ENCODE measurements at regions of chr2 and their contacts with region 1.

Region 1: DNA sequence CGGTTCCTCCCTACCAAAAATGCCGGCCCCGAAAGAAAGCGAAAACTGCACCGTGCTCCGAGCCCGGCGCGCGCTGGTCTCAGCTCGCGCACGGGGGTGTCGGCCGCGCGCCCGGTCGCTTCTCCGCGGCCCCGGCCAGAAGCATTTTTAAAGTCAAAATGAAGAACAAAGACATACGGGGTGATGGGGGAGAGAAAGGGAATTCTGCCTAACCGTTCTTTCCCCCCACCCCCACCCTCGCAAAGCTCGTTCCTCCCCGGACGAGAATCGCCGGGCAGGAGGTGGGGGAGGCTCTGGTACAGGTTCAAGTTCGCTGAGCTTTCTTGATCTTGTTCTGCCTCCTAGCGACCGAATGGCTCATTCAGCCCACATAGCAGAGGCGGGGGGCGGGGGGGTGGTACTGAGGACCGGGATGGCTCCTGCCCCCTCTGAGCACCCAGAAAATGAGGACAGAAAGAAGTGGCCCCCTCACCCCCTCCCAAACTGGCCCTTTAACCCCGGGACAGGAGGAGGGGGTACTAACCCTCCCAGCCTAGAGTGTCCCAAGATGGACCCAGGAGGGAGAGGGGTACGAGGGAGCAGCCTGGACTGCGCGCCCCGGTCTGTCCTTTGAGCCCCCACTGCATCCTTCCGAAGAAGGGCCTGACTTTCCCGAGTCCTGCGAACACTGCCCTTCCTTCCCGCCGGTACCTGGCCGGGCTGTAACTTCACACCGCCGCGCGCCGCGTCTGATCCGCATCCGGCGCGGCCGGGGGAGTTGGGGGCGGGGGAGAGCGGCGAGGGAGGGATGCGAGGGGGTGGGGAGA is 3.1 kb downstream of the BCL11A start:
- DNase-seq: peak; percentile 68
- ATAC-seq: peak; percentile 56
- H3K4me3 Mint-ChIP-seq: peak overlapping the region; percentile 96
- H3K27ac Mint-ChIP-seq: peak overlapping the region; percentile 98
- H3K4me1 Mint-ChIP-seq: peaks cover 41% of the 10 kb centered on the region
- H3K27me3 Mint-ChIP-seq: no peaks in the 10 kb centered on the region
- CTCF ChIP-seq: peak; percentile 32

Region 2: GRCh38 chr2:59713577-59713976 is 836.8 kb before region 1 on chr2:
- CTCF ChIA-PET with region 1: interaction called, 3 read pairs
- POLR2A ChIA-PET with region 1: no interaction called
- intact Hi-C with region 1: loop called (anchors 5 kb)
- DNase-seq: no peak
- ATAC-seq: peak; percentile 83
- H3K4me3 Mint-ChIP-seq: no peak overlapping the region
- H3K27ac Mint-ChIP-seq: no peak overlapping the region
- H3K4me1 Mint-ChIP-seq: peaks cover 12% of the 10 kb centered on the region
- H3K27me3 Mint-ChIP-seq: no peaks in the 10 kb centered on the region
- CTCF ChIP-seq: no peak

Region 3: GRCh38 chr2:60152226-60152833 is 398.1 kb before region 1 on chr2:
- CTCF ChIA-PET with region 1: interaction called, 4 read pairs
- POLR2A ChIA-PET with region 1: interaction called, 19 read pairs
- intact Hi-C with region 1: loop called (anchors 2 kb)
- DNase-seq: no peak
- ATAC-seq: no peak
- H3K4me3 Mint-ChIP-seq: no peak overlapping the region
- H3K27ac Mint-ChIP-seq: no peak overlapping the region
- H3K4me1 Mint-ChIP-seq: peaks cover 23% of the 10 kb centered on the region
- H3K27me3 Mint-ChIP-seq: no peaks in the 10 kb centered on the region
- CTCF ChIP-seq: no peak

Region 4: DNA sequence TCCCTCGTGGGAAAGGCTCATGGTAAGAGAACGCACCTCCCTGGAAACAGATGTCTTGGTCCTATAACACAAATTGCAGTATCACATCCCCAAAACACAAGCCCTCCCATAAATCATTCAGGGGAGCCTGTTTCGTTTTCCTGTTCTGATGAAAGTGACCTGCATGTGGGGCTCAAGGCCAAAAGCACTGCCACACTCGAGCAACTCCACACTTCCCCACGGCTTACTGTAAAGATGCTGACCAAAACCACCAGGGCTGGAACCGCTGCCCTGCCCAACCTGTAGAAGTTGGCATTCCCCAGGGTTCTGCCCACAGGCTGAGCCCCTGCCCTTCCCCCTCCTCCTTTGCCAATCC is 136.6 kb before region 1 on chr2:
- CTCF ChIA-PET with region 1: interaction called, 6 read pairs
- POLR2A ChIA-PET with region 1: interaction called, 14 read pairs
- intact Hi-C with region 1: loop called (anchors 1 kb)
- DNase-seq: peak; percentile 41
- ATAC-seq: peak; percentile 72
- H3K4me3 Mint-ChIP-seq: peak overlapping the region; percentile 8
- H3K27ac Mint-ChIP-seq: peak overlapping the region; percentile 90
- H3K4me1 Mint-ChIP-seq: peaks cover 87% of the 10 kb centered on the region
- H3K27me3 Mint-ChIP-seq: no peaks in the 10 kb centered on the region
- CTCF ChIP-seq: no peak

Region 5: GRCh38 chr2:60504049-60504448 is 46.3 kb before region 1 on chr2:
- CTCF ChIA-PET with region 1: interaction called, 10 read pairs
- POLR2A ChIA-PET with region 1: interaction called, 47 read pairs
- intact Hi-C with region 1: loop called (anchors 1 kb)
- DNase-seq: no peak
- ATAC-seq: peak; percentile 43
- H3K4me3 Mint-ChIP-seq: peak overlapping the region; percentile 58
- H3K27ac Mint-ChIP-seq: peak overlapping the region; percentile 90
- H3K4me1 Mint-ChIP-seq: peaks cover 98% of the 10 kb centered on the region
- H3K27me3 Mint-ChIP-seq: no peaks in the 10 kb centered on the region
- CTCF ChIP-seq: no peak

Region 6: DNA sequence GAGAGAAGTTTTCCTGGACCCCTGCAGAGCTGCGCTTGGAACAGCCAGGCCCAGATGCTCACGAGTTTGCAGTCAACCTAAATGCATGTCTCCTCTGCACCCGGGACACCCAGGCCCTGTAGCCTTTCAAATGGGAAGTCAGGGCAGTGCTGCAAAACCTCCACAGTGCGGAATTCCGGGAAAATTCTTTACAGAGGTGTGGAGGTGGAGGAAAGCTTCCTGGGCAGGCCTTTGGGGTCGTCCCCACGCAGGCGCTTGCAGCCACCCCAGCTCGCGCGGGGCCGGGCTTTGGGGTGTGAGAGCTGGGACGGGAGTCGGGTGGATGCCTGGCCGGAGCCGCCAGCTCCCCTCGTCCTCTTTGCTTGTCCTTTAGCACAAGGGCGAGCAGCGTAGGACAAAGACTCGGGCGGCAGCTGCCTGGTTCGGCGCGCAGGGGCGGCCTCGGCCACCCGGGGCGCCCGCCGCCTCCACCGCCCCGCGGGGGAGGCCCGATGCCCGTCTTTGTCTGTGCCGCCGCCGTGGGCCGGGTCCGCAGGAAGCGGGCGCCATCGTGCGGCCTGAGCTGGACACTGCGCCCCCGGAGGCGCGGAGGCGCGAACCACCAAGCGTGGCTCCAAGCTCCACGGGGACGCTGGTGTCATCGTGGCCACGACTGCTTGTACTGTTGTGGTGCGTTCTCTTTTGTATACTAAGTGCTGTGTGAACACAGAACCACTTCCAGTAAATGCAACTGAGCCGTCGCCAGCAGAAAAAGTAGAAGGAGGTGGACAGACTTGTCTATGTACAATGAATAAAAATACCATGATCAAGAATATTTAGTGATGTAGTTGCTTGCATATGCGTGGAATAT is 31.3 kb after region 1 on chr2:
- CTCF ChIA-PET with region 1: interaction called, 11 read pairs
- POLR2A ChIA-PET with region 1: interaction called, 8 read pairs
- intact Hi-C with region 1: no loop called
- DNase-seq: peak; percentile 85
- ATAC-seq: peak; percentile 100
- H3K4me3 Mint-ChIP-seq: peak overlapping the region; percentile 70
- H3K27ac Mint-ChIP-seq: no peak overlapping the region
- H3K4me1 Mint-ChIP-seq: peaks cover 3% of the 10 kb centered on the region
- H3K27me3 Mint-ChIP-seq: peaks cover 10% of the 10 kb centered on the region
- CTCF ChIP-seq: peak; percentile 64

Measured in activated B cell treated with CpG ODN at 0.5 μM for 24 hours (primary cell).